PC-9 (cell line): ENCODE measurements at regions of chr19 and their contacts with region 1.

Region 1: GRCh38 chr19:34317311-34317927 is 47.6 kb upstream of the GPI start:
- DNase-seq: peak; percentile 11 to 65
- H3K4me3 ChIP-seq: no peak overlapping the region
- H3K27ac ChIP-seq: peak overlapping the region; percentile 91
- H3K4me1 ChIP-seq: peaks cover 52% of the 10 kb centered on the region
- H3K27me3 ChIP-seq: no peaks in the 10 kb centered on the region
- CTCF ChIP-seq: no peak

Region 2: GRCh38 chr19:34134190-34135053 is 183.0 kb before region 1 on chr19:
- CTCF ChIA-PET with region 1: no interaction called
- POLR2A ChIA-PET with region 1: no interaction called
- intact Hi-C with region 1: no loop called
- DNase-seq: peak; percentile 52 to 92
- H3K4me3 ChIP-seq: peak overlapping the region; percentile 100
- H3K27ac ChIP-seq: peak overlapping the region; percentile 81
- H3K4me1 ChIP-seq: peaks cover 6% of the 10 kb centered on the region; the same call in 1 of the 2 replicates
- H3K27me3 ChIP-seq: peaks cover 22% of the 10 kb centered on the region; the same call in 1 of the 2 replicates
- CTCF ChIP-seq: no peak

Region 3: DNA sequence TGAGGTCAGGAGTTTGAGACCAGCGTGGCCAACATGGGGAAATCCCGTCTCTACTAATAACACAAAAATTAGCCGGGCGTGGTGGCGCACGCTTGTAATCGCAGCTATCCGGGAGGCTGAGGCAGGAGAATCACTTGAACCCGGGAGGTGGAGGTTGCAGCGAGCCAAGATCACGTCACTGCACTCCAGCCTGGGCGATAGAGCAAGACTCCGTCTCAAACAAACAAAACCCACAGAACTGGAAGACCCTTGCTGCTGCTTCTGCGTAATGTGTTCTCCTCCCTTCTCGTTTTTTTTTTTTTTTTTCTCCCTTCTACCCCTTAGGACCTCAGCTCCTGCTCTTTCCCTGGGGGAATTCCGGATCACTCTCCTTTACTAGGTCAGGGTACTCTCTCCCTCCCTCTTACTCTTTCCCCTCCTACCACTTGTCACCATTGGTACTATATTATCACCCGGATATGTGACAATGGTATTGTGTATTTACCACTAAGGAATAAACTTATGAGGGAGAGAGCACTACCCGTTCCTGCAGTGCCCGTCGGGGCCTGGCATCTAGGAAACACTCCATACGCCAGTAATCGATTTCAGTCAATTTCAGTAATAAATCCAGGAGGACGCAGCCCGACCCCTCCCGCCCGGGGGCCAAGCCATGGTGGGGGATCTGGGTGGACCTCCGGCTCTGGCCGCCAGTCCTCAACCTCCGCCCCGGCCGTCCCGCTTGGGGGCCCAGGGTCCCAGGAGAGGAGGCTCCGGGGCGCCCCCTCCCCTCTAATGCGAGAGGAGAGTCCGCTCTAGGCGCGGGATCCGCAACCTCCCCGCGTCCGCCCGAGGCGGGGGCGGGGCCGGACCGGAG is 63.5 kb before region 1 on chr19:
- CTCF ChIA-PET with region 1: no interaction called
- POLR2A ChIA-PET with region 1: no interaction called
- intact Hi-C with region 1: loop called (anchors 10 kb)
- DNase-seq: peak in 1 of 2 experiments; percentile 56
- H3K4me3 ChIP-seq: peak overlapping the region; percentile 96
- H3K27ac ChIP-seq: no peak overlapping the region
- H3K4me1 ChIP-seq: 0 out of 2 replicates have a peak, but pooled peaks cover 13% of the 10 kb centered on the region
- H3K27me3 ChIP-seq: no peaks in the 10 kb centered on the region
- CTCF ChIP-seq: 0 out of 2 replicates have a peak, but pooled peaks have one; percentile 19

Region 4: DNA sequence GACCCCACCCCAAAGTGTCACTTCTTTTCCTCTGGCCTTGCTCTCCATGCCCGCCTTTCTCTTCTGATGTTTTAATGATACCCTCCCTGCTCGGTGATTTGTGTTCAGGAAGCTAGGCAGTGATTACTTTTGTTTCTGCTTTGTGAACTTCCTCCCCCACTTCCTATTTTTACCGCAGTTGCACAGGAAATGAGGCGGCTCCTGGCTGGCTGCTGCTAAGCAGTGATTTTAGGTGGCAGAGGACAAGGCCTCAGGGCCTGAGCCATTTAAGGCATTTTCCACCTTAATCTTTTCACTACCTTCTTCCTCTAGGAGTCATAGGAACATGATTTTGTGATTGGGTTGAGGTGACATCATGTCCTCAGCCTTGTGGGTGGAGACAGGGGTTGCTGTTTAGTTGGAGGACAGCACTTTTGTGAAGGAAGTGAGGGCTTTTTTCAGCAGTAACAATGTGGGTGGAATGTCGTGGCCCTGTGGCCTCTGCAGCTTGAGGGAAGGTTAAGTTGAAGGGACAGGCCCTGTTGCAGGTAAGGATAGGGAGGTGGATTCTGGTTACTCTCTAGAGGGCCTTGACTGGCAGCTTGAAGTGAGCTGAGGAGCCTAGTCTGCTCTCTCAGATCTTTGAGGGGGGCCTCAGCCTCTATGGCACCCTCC is 47.3 kb before region 1 on chr19:
- CTCF ChIA-PET with region 1: no interaction called
- POLR2A ChIA-PET with region 1: interaction called, 6 read pairs
- intact Hi-C with region 1: loop called (anchors 2 kb)
- DNase-seq: peak; percentile 61 to 74
- H3K4me3 ChIP-seq: no peak overlapping the region
- H3K27ac ChIP-seq: peak overlapping the region; percentile 33
- H3K4me1 ChIP-seq: peaks cover 13% of the 10 kb centered on the region
- H3K27me3 ChIP-seq: no peaks in the 10 kb centered on the region
- CTCF ChIP-seq: no peak

Region 5: DNA sequence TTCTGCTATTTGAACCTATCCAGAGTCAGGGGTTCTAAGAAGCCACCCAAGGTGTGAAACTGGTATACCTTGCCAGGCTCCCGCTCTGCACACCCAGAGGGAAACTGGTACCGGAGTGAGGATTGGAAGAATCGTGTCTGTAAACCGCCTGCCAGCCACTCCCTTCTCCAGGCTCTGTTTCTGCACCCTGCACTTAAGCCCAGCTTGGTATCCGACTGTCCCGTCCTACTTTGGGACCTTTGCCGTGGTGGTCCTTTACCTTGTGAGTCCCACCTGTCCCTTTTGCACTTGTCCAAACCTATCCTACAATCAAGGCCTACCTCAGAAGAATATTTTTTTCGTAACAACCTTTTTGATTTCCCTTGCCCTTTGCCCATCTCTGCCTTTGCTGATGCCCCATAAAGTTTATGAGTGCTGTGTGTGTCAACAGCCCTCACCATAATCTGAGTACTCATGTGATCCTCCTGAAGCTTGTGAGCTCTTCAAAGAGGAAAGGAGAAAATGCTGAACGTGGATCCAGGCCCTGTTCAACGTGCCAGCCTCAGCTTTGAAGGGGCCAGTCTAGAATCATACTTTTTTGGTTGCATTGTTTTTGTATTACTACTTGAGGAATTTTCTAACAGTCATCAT is 18.4 kb before region 1 on chr19:
- CTCF ChIA-PET with region 1: no interaction called
- POLR2A ChIA-PET with region 1: interaction called, 11 read pairs
- intact Hi-C with region 1: no loop called
- DNase-seq: no peak
- H3K4me3 ChIP-seq: no peak overlapping the region
- H3K27ac ChIP-seq: no peak overlapping the region
- H3K4me1 ChIP-seq: no peaks in the 10 kb centered on the region
- H3K27me3 ChIP-seq: no peaks in the 10 kb centered on the region
- CTCF ChIP-seq: no peak

Region 6: DNA sequence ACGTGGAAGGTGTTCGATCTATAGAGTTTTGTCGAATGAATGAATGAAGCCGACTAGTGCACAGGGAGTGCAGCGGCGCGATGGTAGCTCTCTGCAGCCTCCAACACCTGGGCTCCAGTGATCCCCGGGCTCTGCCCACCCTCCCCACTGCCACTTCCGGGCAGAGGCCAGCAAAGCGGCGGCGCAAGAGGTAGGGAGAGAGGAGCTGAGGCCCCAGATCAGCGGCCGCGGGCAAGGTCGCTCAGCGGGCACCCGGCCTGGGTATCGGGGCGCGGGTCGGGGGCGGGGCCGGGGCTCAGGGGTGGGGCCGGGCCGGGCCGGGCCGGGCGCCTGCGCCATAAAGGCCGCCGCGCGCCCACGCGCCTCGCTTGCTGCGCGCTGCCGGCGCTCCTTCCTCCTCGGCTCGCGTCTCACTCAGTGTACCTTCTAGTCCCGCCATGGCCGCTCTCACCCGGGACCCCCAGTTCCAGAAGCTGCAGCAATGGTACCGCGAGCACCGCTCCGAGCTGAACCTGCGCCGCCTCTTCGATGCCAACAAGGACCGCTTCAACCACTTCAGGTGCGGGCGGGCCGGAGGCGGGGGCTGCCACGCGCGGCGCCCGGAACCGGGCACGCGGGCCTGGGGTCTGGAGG is 47.5 kb after region 1 on chr19 and contains the start of gene GPI:
- CTCF ChIA-PET with region 1: no interaction called
- POLR2A ChIA-PET with region 1: no interaction called
- intact Hi-C with region 1: no loop called
- DNase-seq: peak in 1 of 2 experiments; percentile 75
- H3K4me3 ChIP-seq: peak within 1 kb of the TSS; percentile 80
- H3K27ac ChIP-seq: peak within 1 kb of the TSS; percentile 56
- H3K4me1 ChIP-seq: peaks cover 22% of the 10 kb centered on the region
- H3K27me3 ChIP-seq: no peaks in the 10 kb centered on the region
- CTCF ChIP-seq: no peak
- total RNA-seq, gene GPI: 365 and 522 TPM in 2 replicates

Region 7: GRCh38 chr19:34837262-34837661 is 519.8 kb after region 1 on chr19:
- CTCF ChIA-PET with region 1: no interaction called
- POLR2A ChIA-PET with region 1: no interaction called
- intact Hi-C with region 1: no loop called
- DNase-seq: no peak
- H3K4me3 ChIP-seq: no peak overlapping the region
- H3K27ac ChIP-seq: no peak overlapping the region
- H3K4me1 ChIP-seq: no peaks in the 10 kb centered on the region
- H3K27me3 ChIP-seq: peaks cover 83% of the 10 kb centered on the region
- CTCF ChIP-seq: no peak

Region 8: GRCh38 chr19:34974646-34975045 is 657.2 kb after region 1 on chr19:
- CTCF ChIA-PET with region 1: no interaction called
- POLR2A ChIA-PET with region 1: no interaction called
- intact Hi-C with region 1: no loop called
- DNase-seq: no peak
- H3K4me3 ChIP-seq: no peak overlapping the region
- H3K27ac ChIP-seq: no peak overlapping the region
- H3K4me1 ChIP-seq: no peaks in the 10 kb centered on the region
- H3K27me3 ChIP-seq: peaks cover 44% of the 10 kb centered on the region
- CTCF ChIP-seq: no peak